Activated T-helper 1 cell treated with anti-CD3 and anti-CD28 coated beads, Interleukin-12 subunit alpha, Interleukin-12 subunit beta, Interleukin-2, Interleukin-4 antibody, amounts not matched to agents 30 ng/mL and 10 ng/mL and 1 ng/mL, durations not matched to agents 14 hours and 24 hours and 36 hours (primary cell): ENCODE measurements at regions of chrX and their contacts with region 1.

Region 1: DNA sequence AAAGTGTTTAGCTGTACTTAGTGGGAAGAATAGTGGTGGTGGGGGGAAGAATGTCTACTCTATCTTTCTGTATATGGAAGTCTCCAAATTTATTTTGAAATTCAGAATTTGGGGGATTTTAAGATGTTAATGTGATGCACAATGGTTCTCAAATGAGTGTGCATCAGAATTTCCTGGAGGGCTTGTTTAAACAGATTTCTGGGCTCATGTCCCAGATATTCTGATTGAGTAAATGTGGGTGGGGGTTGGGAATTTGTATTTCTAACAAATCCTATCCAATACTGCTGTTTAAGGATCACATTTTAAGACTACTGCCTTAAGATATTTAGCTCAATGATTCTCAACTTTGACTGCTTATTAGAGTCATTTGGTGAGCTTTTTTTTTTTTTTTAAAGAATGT is 15.1 kb upstream of the INTS6L start:
- DNase-seq: no peak
- H3K4me3 Mint-ChIP-seq: no peak overlapping the region
- H3K27ac Mint-ChIP-seq: no peak overlapping the region
- H3K4me1 Mint-ChIP-seq: no peaks in the 10 kb centered on the region
- H3K27me3 Mint-ChIP-seq: peaks cover 3% of the 10 kb centered on the region

Region 2: GRCh38 chrX:135490979-135491514 is 14.3 kb before region 1 on chrX:
- intact Hi-C with region 1: loop called (anchors 1 kb)
- DNase-seq: no peak
- H3K4me3 Mint-ChIP-seq: no peak overlapping the region
- H3K27ac Mint-ChIP-seq: no peak overlapping the region
- H3K4me1 Mint-ChIP-seq: peaks cover 12% of the 10 kb centered on the region
- H3K27me3 Mint-ChIP-seq: no peaks in the 10 kb centered on the region

Region 3: GRCh38 chrX:135596495-135596894 is 91.1 kb after region 1 on chrX:
- intact Hi-C with region 1: no loop called
- DNase-seq: peak; percentile 14
- H3K4me3 Mint-ChIP-seq: no peak overlapping the region
- H3K27ac Mint-ChIP-seq: no peak overlapping the region
- H3K4me1 Mint-ChIP-seq: no peaks in the 10 kb centered on the region
- H3K27me3 Mint-ChIP-seq: peaks cover 24% of the 10 kb centered on the region